WTC11 (cell line): ENCODE measurements at regions of chr3 and their contacts with region 1.

Region 1: GRCh38 chr3:21017115-21017852 is 733.7 kb downstream of the ZNF385D start:
- DNase-seq: peak; percentile 60
- ATAC-seq: peak; percentile 93
- H3K4me3 Mint-ChIP-seq: no peak overlapping the region
- H3K27ac Mint-ChIP-seq: no peak overlapping the region
- H3K4me1 Mint-ChIP-seq: peaks cover 28% of the 10 kb centered on the region
- H3K27me3 Mint-ChIP-seq: no peaks in the 10 kb centered on the region
- CTCF ChIP-seq: peak; percentile 58

Region 2: GRCh38 chr3:20861454-20861853 is 155.8 kb before region 1 on chr3:
- CTCF ChIA-PET with region 1: no interaction called
- POLR2A ChIA-PET with region 1: no interaction called
- DNase-seq: no peak
- ATAC-seq: no peak
- H3K4me3 Mint-ChIP-seq: no peak overlapping the region
- H3K27ac Mint-ChIP-seq: no peak overlapping the region
- H3K4me1 Mint-ChIP-seq: peaks cover 25% of the 10 kb centered on the region
- H3K27me3 Mint-ChIP-seq: no peaks in the 10 kb centered on the region; the same call in 1 of the 2 replicates
- CTCF ChIP-seq: no peak

Region 3: GRCh38 chr3:21170964-21171363 is 153.7 kb after region 1 on chr3:
- CTCF ChIA-PET with region 1: interaction called, 10 read pairs
- POLR2A ChIA-PET with region 1: no interaction called
- DNase-seq: no peak
- ATAC-seq: peak; percentile 95
- H3K4me3 Mint-ChIP-seq: no peak overlapping the region
- H3K27ac Mint-ChIP-seq: no peak overlapping the region
- H3K4me1 Mint-ChIP-seq: peaks cover 31% of the 10 kb centered on the region
- H3K27me3 Mint-ChIP-seq: no peaks in the 10 kb centered on the region
- CTCF ChIP-seq: peak; percentile 48; the same call in 1 of the 2 replicates

Region 4: DNA sequence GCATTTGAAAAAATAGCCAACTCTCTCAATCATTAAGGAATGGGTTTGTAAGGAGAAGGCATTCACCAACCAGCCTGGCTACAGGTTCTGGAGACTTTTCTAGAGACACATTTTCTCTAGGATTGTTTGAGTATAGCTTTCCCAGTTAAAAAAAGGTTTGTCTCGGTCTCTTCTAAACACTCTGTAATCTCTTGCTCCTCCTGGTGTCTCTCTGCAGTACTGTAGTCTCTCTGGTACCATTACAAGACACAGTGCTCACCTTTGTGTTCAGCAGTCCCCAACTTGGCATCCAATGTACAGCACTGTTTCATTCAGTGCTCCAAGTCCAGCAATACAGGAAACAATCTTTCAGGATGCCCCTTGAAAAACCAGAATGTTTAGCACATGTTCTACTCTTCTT is 199.3 kb after region 1 on chr3:
- CTCF ChIA-PET with region 1: interaction called, 13 read pairs
- POLR2A ChIA-PET with region 1: no interaction called
- DNase-seq: no peak
- ATAC-seq: peak; percentile 97
- H3K4me3 Mint-ChIP-seq: no peak overlapping the region
- H3K27ac Mint-ChIP-seq: no peak overlapping the region
- H3K4me1 Mint-ChIP-seq: peaks cover 3% of the 10 kb centered on the region; the same call in 1 of the 2 replicates
- H3K27me3 Mint-ChIP-seq: no peaks in the 10 kb centered on the region; the same call in 1 of the 2 replicates
- CTCF ChIP-seq: peak; percentile 38

Region 5: DNA sequence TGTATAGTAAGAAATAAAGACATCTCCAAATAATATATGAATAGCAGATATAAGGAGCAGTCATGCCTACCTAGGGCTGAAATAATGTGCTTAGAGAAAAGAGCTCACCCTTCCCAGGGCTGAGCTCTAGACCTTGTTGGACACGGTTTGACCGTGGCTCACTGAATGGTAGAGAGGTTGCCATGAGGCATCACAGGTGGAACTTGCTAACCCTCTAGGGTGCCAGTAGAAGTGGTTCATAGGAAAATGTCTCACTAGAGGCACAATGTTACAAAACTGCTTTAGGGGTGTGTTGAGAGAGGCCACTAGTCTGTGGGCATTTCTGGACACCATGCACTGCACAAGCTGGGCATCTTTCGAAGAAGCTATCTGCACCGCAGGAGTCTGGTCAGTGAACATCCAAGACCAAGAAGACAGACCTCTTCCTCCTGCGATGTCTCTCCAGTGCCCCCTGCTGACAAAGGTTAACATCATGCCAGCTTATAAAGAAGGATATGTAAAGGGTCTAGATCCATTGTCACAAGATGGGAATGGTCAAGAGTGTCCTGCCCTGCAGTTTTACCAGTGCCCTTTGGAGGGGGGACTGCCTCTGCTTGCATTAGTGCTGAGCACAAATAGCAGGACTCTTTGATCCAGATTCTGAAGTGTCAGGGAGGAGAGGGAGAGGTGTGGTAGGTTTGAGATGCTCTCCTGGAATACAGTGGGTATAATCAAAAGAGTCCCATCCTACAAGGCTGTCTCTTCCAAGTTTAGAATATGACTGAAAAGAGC is 467.0 kb after region 1 on chr3:
- CTCF ChIA-PET with region 1: interaction called, 11 read pairs
- POLR2A ChIA-PET with region 1: no interaction called
- DNase-seq: peak; percentile 68
- ATAC-seq: peak; percentile 99
- H3K4me3 Mint-ChIP-seq: no peak overlapping the region
- H3K27ac Mint-ChIP-seq: no peak overlapping the region
- H3K4me1 Mint-ChIP-seq: peaks cover 2% of the 10 kb centered on the region; the same call in 1 of the 2 replicates
- H3K27me3 Mint-ChIP-seq: no peaks in the 10 kb centered on the region
- CTCF ChIP-seq: peak; percentile 44